ENCODE measurements at regions of chr7 and their contacts with region 1.

Region 1: DNA sequence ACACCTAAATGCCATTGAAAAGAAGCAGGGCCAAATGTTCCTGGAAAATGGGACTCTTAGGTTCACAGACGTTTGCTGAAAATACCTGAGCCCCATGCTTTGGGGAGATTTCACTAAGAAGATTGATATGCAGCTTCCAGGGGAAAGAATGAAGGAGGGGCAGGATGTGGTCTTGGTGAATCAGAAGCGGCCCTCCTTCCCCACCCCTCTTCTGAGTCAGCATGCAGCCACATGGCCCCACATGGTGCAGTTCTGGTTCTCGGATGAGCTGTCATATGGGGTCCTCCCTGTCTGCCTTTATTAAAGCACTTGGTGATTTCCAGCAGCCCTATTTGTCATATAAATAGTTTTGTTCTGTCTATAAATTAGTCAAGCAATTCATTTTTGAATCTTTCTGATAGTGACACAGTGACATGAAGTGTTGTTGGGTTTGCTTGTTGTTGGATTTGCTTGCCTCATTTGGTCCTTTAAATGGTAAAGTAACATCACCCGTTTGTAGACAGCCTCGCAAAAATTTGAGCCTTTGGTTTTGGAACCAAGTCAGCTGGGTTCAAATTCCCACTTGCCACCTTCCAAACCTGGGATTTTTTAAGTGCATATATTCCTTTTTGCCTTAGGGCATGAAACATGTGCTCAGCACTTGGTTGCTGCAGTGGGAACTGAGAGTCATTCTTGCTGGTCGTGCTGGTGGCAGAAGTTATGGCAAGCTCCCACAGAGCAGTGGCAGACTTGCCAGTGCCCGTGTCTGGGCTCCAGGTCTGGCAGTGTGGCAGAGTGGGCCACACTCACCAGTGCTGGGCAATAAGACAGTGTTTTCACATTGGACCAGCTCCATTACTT is 68.1 kb upstream of the CDK6 start:
- DNase-seq: peak; percentile 94
- ATAC-seq: peak; percentile 96
- H3K4me3 Mint-ChIP-seq: peak overlapping the region; percentile 19
- H3K27ac Mint-ChIP-seq: peak overlapping the region; percentile 89
- H3K4me1 Mint-ChIP-seq: peaks cover 30% of the 10 kb centered on the region
- H3K27me3 Mint-ChIP-seq: peaks cover 4% of the 10 kb centered on the region

Region 2: GRCh38 chr7:92641921-92642511 is 262.5 kb before region 1 on chr7:
- CTCF ChIA-PET with region 1: no interaction called
- POLR2A ChIA-PET with region 1: no interaction called
- intact Hi-C with region 1: loop called in 1 of 2 experiments (anchors 5 kb)
- DNase-seq: peak; percentile 78
- ATAC-seq: peak; percentile 69
- H3K4me3 Mint-ChIP-seq: peak overlapping the region; percentile 37
- H3K27ac Mint-ChIP-seq: peak overlapping the region; percentile 92
- H3K4me1 Mint-ChIP-seq: peaks cover 86% of the 10 kb centered on the region
- H3K27me3 Mint-ChIP-seq: no peaks in the 10 kb centered on the region

Region 3: GRCh38 chr7:92708111-92709042 is 196.1 kb before region 1 on chr7:
- CTCF ChIA-PET with region 1: no interaction called
- POLR2A ChIA-PET with region 1: no interaction called
- intact Hi-C with region 1: loop called (anchors 1 kb)
- DNase-seq: no peak
- ATAC-seq: peak; percentile 84
- H3K4me3 Mint-ChIP-seq: no peak overlapping the region
- H3K27ac Mint-ChIP-seq: peak overlapping the region; percentile 86
- H3K4me1 Mint-ChIP-seq: peaks cover 52% of the 10 kb centered on the region
- H3K27me3 Mint-ChIP-seq: no peaks in the 10 kb centered on the region

Region 4: GRCh38 chr7:92809397-92810241 is 94.9 kb before region 1 on chr7:
- CTCF ChIA-PET with region 1: no interaction called
- POLR2A ChIA-PET with region 1: interaction called, 5 read pairs
- intact Hi-C with region 1: loop called (anchors 1 kb)
- DNase-seq: peak; percentile 75
- ATAC-seq: peak; percentile 56
- H3K4me3 Mint-ChIP-seq: peak overlapping the region; percentile 50
- H3K27ac Mint-ChIP-seq: peak overlapping the region; percentile 83
- H3K4me1 Mint-ChIP-seq: peaks cover 81% of the 10 kb centered on the region
- H3K27me3 Mint-ChIP-seq: no peaks in the 10 kb centered on the region

Region 5: GRCh38 chr7:92880212-92881090 is 24.1 kb before region 1 on chr7:
- CTCF ChIA-PET with region 1: no interaction called
- POLR2A ChIA-PET with region 1: no interaction called
- intact Hi-C with region 1: loop called in 1 of 2 experiments (anchors 2 kb)
- DNase-seq: peak; percentile 26
- ATAC-seq: peak; percentile 54
- H3K4me3 Mint-ChIP-seq: no peak overlapping the region
- H3K27ac Mint-ChIP-seq: no peak overlapping the region
- H3K4me1 Mint-ChIP-seq: peaks cover 18% of the 10 kb centered on the region
- H3K27me3 Mint-ChIP-seq: peaks cover 4% of the 10 kb centered on the region

Region 6: GRCh38 chr7:93036807-93037206 is 132.3 kb after region 1 on chr7:
- CTCF ChIA-PET with region 1: no interaction called
- POLR2A ChIA-PET with region 1: interaction called, 10 read pairs
- intact Hi-C with region 1: loop called (anchors 1 kb)
- DNase-seq: peak; percentile 67
- ATAC-seq: peak; percentile 97
- H3K4me3 Mint-ChIP-seq: no peak overlapping the region
- H3K27ac Mint-ChIP-seq: peak overlapping the region; percentile 74
- H3K4me1 Mint-ChIP-seq: peaks cover 20% of the 10 kb centered on the region
- H3K27me3 Mint-ChIP-seq: no peaks in the 10 kb centered on the region

Region 7: DNA sequence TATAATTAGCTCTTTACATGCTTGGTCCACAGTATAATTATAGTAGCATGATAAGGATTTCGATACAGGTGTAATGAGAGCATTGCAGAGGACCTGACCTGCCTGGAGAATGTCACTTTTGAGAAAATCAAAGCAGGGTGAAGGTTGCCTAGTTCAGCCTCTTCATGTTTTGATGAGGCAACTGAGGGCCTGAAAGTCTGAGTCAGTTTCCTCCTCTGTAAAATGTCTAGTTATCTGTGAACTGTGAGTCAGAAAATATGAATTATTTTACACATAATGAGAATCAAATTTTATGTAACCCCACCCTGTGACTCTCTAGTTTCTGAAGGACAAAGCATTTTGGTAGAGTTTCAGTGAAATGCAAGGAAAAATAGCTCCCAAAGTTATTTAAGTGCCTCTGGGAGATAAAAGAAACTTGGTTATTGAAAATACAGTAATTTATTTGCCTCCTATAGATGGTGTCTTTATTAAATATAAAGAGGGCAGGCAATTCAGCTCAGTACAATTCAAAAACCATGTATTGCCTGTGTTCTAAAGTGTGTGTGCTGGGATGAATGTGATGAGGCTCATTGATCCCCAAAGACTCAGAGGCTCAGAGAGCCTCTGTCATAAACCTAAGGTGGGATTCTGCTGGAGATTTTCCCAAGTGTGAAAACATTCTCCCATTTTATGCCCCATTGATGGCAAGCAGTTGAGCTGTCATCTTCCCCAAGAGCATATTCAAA is 281.0 kb after region 1 on chr7:
- CTCF ChIA-PET with region 1: no interaction called
- POLR2A ChIA-PET with region 1: no interaction called
- intact Hi-C with region 1: loop called in 1 of 2 experiments (anchors 5 kb)
- DNase-seq: peak; percentile 39
- ATAC-seq: peak; percentile 98
- H3K4me3 Mint-ChIP-seq: no peak overlapping the region
- H3K27ac Mint-ChIP-seq: no peak overlapping the region
- H3K4me1 Mint-ChIP-seq: peaks cover 11% of the 10 kb centered on the region
- H3K27me3 Mint-ChIP-seq: peaks cover 44% of the 10 kb centered on the region

Region 8: DNA sequence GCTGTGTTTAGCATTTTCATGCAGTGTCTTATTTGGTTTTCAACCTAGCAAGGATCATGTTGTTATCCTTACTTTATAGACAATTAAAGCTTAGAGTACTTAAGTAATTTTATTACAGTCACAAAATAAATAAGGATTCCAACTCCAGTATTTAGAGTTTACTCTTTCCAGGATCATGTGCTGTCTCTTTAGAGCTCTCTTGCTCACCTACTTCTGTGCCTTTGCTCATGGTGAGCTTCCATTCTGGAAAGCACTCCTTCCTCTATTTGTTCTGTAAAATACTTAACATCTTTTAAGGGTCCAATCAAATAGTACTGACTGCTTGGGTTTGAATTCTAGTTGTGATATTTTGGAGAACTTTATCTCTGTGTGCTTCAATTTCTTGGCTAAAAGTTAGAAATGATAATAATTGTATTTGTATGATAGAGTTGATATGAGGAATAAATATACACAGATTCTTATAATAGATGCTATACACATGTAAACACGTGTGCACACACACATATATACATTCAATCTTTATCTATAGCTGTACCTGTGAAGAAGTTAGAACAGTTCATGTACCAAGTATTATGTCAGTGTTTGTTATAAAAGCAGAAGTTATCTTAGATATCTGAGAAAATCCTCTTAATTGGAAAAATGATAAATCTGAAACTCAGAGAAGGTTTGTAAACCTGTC is 688.2 kb after region 1 on chr7:
- CTCF ChIA-PET with region 1: no interaction called
- POLR2A ChIA-PET with region 1: no interaction called
- intact Hi-C with region 1: no loop called
- DNase-seq: no peak
- ATAC-seq: no peak
- H3K4me3 Mint-ChIP-seq: no peak overlapping the region
- H3K27ac Mint-ChIP-seq: no peak overlapping the region
- H3K4me1 Mint-ChIP-seq: no peaks in the 10 kb centered on the region
- H3K27me3 Mint-ChIP-seq: no peaks in the 10 kb centered on the region